ENCODE measurements at regions of chr18 and their contacts with region 1.

Region 1: GRCh38 chr18:31901063-31901462 is 41.9 kb downstream of the TRAPPC8 start:
- DNase-seq: no peak
- ATAC-seq: no peak
- H3K4me3 ChIP-seq: no peak overlapping the region
- H3K27ac ChIP-seq: no peak overlapping the region
- H3K4me1 ChIP-seq: no peaks in the 10 kb centered on the region
- H3K27me3 ChIP-seq: no peaks in the 10 kb centered on the region
- CTCF ChIP-seq: no peak
- POLR2A ChIP-seq: no peak
- RAD21 ChIP-seq: no peak

Region 2: DNA sequence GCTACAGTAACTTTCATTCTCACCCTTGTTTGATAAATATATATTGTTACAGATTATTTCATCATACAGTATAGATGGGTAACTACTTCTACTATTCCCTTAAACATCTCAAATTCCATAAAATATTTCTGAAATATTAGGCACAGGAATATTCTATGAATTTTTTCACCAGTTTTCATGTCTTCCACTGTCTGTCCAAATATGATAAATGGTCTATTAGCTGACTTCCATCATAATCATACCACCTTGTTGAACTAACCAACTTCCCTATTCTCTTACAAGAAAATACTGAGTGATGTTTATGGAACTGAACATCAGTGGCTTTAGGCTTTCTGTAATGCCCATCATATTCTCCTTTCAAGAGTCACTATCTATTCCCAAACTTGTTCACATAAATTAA is 40.6 kb before region 1 on chr18:
- CTCF ChIA-PET with region 1: no interaction called
- POLR2A ChIA-PET with region 1: no interaction called
- dilution Hi-C with region 1: no loop called
- in situ Hi-C with region 1: no loop called
- intact Hi-C with region 1: loop called (anchors 5 kb)
- DNase-seq: no peak
- ATAC-seq: no peak
- H3K4me3 ChIP-seq: no peak overlapping the region
- H3K27ac ChIP-seq: no peak overlapping the region
- H3K4me1 ChIP-seq: no peaks in the 10 kb centered on the region
- H3K27me3 ChIP-seq: no peaks in the 10 kb centered on the region
- CTCF ChIP-seq: no peak
- POLR2A ChIP-seq: no peak
- RAD21 ChIP-seq: no peak

Region 3: GRCh38 chr18:31884020-31884419 is 17.0 kb before region 1 on chr18:
- CTCF ChIA-PET with region 1: interaction called, 10 read pairs
- POLR2A ChIA-PET with region 1: no interaction called
- dilution Hi-C with region 1: no loop called
- in situ Hi-C with region 1: no loop called
- intact Hi-C with region 1: no loop called
- DNase-seq: no peak
- ATAC-seq: no peak
- H3K4me3 ChIP-seq: no peak overlapping the region
- H3K27ac ChIP-seq: no peak overlapping the region
- H3K4me1 ChIP-seq: no peaks in the 10 kb centered on the region
- H3K27me3 ChIP-seq: no peaks in the 10 kb centered on the region
- CTCF ChIP-seq: no peak
- POLR2A ChIP-seq: no peak
- RAD21 ChIP-seq: no peak

Region 4: GRCh38 chr18:32072321-32072720 is 171.3 kb after region 1 on chr18:
- CTCF ChIA-PET with region 1: no interaction called
- POLR2A ChIA-PET with region 1: no interaction called
- dilution Hi-C with region 1: no loop called
- in situ Hi-C with region 1: no loop called
- intact Hi-C with region 1: no loop called
- DNase-seq: no peak
- ATAC-seq: no peak
- H3K4me3 ChIP-seq: no peak overlapping the region
- H3K27ac ChIP-seq: no peak overlapping the region
- H3K4me1 ChIP-seq: no peaks in the 10 kb centered on the region
- H3K27me3 ChIP-seq: 0 out of 2 replicates have a peak, but pooled peaks cover 1% of the 10 kb centered on the region
- CTCF ChIP-seq: peak; percentile 9; the same call in 1 of the 2 replicates
- POLR2A ChIP-seq: no peak
- RAD21 ChIP-seq: no peak